Activated naive CD4-positive, alpha-beta T cell treated with anti-CD3 and anti-CD28 coated beads for 36 hours (primary cell): ENCODE measurements at regions of chrX and their contacts with region 1.

Region 1: DNA sequence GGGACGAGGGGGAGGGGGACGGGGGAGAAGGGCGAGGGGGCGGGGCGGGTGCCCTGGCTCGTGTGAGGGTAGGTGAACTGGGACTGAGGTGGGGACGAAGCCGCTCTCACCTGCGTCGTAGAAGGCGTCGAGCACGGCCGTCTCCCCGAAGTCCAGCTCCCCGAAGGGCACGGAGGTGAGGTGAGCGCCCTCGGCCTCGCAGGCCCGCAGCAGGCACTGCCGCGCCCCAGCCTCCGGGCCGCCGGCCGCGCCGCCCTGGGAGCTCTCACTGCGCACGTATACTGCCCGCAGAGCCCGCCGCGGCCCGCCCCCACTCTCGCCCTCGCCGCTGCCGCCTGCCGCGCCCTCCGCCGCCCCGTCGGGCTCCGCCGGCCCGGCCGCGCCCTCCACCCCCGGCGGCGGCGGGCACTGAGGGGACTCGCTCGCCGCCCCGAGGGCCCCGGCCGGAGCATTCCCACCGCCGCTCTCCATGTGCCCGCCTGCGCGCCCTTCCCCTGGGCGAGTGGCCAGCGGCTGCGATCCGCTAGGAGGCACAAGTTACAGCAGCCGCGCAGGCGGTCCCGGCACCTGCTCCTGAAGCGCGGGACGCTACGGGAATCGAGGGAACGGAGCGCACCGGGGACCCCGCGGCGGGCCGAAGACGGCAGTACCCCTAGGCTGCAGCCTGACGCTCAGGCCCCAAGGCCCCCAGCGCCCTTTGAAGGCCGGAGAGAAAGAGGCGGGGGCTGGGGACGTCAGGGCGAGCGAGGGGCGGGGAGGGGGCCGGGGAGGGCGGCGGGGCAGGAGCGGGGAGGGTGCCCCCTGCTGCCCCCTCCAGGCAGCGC is at the start of gene MAP3K15:
- DNase-seq: peak; percentile 15
- H3K4me3 Mint-ChIP-seq: peak within 1 kb of the TSS; percentile 50
- H3K27ac Mint-ChIP-seq: no peak within 1 kb of the TSS
- H3K4me1 Mint-ChIP-seq: no peaks in the 10 kb centered on the region
- H3K27me3 Mint-ChIP-seq: peaks cover 10% of the 10 kb centered on the region
- total RNA-seq, gene MAP3K15: 1.2 to 1.3 TPM

Region 2: GRCh38 chrX:19245711-19246269 is 269.2 kb before region 1 on chrX:
- CTCF ChIA-PET with region 1: no interaction called
- intact Hi-C with region 1: no loop called
- DNase-seq: no peak
- H3K4me3 Mint-ChIP-seq: no peak overlapping the region
- H3K27ac Mint-ChIP-seq: no peak overlapping the region
- H3K4me1 Mint-ChIP-seq: no peaks in the 10 kb centered on the region
- H3K27me3 Mint-ChIP-seq: no peaks in the 10 kb centered on the region

Region 3: GRCh38 chrX:19532709-19533108 is 17.7 kb after region 1 on chrX:
- CTCF ChIA-PET with region 1: interaction called, 4 read pairs
- intact Hi-C with region 1: loop called (anchors 1 kb)
- DNase-seq: no peak
- H3K4me3 Mint-ChIP-seq: no peak overlapping the region
- H3K27ac Mint-ChIP-seq: no peak overlapping the region
- H3K4me1 Mint-ChIP-seq: no peaks in the 10 kb centered on the region
- H3K27me3 Mint-ChIP-seq: no peaks in the 10 kb centered on the region